Dorsolateral prefrontal cortex (tissue), 120 donors: ENCODE measurements at regions of chr15 and their contacts with region 1.

Region 1: DNA sequence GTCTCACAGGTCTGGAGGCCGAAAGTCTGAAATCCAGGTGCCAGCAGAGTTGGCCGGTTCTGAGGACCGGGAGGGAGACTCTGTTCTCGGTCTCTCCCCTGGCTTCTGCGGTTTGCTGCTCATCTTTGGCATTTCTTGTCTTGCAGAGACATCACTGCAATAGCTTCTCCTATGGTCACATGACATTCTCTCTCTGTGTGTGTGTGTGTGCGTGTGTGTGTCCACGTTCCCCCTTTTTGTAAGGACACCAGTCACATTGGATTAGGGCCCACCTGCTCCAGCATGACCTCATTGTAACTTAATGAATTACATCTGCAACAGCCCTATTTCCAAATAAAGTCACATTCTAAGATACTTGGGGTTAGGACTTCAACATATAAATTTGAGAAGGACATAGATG is 12.4 kb upstream of the ATP10A start:
- DNase-seq: no peak
- H3K4me3 ChIP-seq: no peak overlapping the region
- H3K27ac ChIP-seq: no peak overlapping the region
- H3K27me3 ChIP-seq: peaks cover 0 to 3% (median 0%) of the 10 kb centered on the region in 45 donors
- CTCF ChIP-seq: no peak

Region 2: DNA sequence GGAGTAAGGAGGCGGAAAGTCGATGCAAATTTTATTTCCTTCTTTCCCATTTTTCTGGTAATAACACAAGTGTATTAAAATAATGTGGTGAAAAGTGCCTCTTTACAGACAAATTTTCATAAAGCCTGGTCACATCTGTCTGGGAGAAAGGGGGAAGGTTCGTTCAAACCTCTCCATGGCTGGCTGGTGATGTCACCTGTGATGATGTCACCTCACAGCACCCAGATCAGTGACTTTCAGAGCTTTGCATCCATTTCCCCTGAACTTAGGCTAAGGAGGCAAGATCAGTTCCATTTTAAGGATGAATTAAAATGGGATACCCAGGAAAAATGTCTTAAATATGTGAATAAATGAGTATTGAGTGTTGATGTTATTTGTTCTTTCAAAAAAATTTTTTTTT is 46.5 kb before region 1 on chr15:
- intact Hi-C with region 1: loop called in 1 of 2 experiments (anchors 10 kb)
- DNase-seq: no peak
- H3K4me3 ChIP-seq: no peak overlapping the region
- H3K27ac ChIP-seq: peak overlapping the region in 1 of 59 donors; percentile 12
- H3K27me3 ChIP-seq: no peaks in the 10 kb centered on the region
- CTCF ChIP-seq: no peak